GM13976 (cell line): ENCODE measurements at regions of chr11 and their contacts with region 1.

Region 1: GRCh38 chr11:62370743-62371440 is 33.6 kb downstream of the ASRGL1 start:
- DNase-seq: no peak
- CTCF ChIP-seq: no peak

Region 2: DNA sequence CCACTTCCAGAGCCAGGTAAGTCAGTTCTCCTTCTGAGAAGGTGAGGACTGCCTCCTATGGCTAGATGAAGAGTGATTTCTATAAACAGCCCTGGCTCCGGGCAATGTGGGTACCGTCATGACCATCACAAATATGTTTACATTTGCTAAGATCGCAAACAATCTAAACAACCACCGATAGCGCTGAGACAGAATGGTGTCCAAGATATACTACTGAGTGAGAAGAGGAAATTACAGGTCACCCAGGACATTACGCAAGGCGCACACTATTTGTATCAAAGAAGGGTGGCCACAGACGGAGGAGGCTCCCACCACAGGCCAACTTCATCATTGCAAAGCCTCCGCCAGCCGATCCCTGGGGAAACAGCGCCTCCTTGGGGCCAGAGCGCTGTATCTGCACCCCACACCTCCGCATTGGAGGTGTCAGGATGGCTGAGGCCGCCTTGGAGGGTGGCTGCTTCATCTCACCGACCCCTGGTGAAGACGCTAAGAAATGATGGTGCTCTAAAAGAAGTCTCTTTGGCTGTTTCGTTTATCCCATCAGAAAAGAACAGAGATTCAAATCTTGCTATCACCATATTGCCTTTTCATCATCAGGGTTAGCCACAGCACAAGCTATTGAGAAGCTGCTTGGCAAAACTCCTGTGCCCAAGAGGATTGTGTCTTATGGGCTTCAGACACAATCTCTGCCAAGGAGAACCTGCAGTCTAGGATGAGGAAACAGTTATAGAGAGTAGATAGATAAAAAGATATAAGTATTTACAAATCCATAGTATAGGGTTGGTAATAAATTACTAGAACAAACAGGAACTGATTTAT is 45.9 kb before region 1 on chr11:
- in situ Hi-C with region 1: loop called (anchors 10 kb)
- DNase-seq: peak; percentile 74
- CTCF ChIP-seq: peak; percentile 75